Kidney (tissue), 22 donors: ENCODE measurements at regions of chr12 and their contacts with region 1.

Region 1: GRCh38 chr12:70576346-70577282 is 60.6 kb downstream of the PTPRB start:
- DNase-seq: peak in 2 of 5 donors; percentile 88 to 89
- H3K4me3 ChIP-seq: no peak overlapping the region
- H3K27ac ChIP-seq: no peak overlapping the region
- H3K4me1 ChIP-seq: no peaks in the 10 kb centered on the region
- H3K27me3 ChIP-seq: no peaks in the 10 kb centered on the region
- CTCF ChIP-seq: peak; percentile 77

Region 2: DNA sequence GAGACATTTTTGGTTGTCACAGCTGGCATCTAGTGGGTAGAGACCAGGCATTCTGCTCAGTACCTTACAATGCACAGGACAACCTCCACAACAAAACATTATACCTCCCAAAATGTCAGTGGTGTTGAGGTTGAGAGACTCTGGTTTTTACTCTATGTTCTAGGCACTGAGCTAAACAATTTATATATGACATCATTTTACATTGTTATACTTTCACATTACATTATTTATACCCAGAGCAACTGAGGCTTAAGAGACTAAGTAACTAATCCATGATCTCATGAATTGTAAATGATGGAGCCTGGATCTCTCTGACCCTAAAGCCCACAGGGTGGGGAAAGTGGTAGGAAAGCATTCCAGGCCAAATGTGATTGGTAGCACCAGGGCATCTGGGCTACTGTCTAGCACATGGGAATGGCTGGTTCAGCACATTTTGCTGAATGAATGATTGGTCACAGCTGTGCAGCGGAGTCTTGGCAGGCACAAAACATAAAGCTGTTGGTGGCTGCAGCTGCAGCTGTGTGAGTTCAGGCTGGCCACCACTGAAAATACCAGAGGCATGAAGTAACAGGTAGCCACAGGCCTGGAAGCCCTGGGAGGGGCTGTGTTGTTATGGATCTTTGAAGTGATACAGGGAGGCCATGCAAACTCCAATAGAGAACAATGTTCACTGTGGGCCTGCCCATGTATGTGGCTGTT is 679.0 kb before region 1 on chr12:
- intact Hi-C with region 1: loop called (anchors 10 kb)
- DNase-seq: peak in 4 of 5 donors; percentile 59 to 85 (median 64)
- H3K4me3 ChIP-seq: no peak overlapping the region
- H3K27ac ChIP-seq: no peak overlapping the region
- H3K4me1 ChIP-seq: peaks cover 0 to 2% (median 0%) of the 10 kb centered on the region in 3 donors
- H3K27me3 ChIP-seq: no peaks in the 10 kb centered on the region
- CTCF ChIP-seq: no peak